Heart left ventricle (tissue), 16 donors: ENCODE measurements at regions of chr11 and their contacts with region 1.

Region 1: GRCh38 chr11:128336203-128336602 is 251.2 kb downstream of the ETS1 start:
- DNase-seq: peak; percentile 48 to 78 (median 50)
- ATAC-seq: peak in 3 of 4 donors; percentile 54 to 85 (median 78)
- H3K4me3 ChIP-seq: no peak overlapping the region
- H3K27ac ChIP-seq: peak overlapping the region in 9 of 12 donors; percentile 14 to 85 (median 74)
- H3K4me1 ChIP-seq: peaks cover 0 to 45% (median 23%) of the 10 kb centered on the region in 12 donors
- H3K27me3 ChIP-seq: no peaks in the 10 kb centered on the region
- CTCF ChIP-seq: no peak
- POLR2A ChIP-seq: no peak

Region 2: GRCh38 chr11:128269466-128269865 is 66.7 kb before region 1 on chr11:
- intact Hi-C with region 1: no loop called
- DNase-seq: no peak
- ATAC-seq: no peak
- H3K4me3 ChIP-seq: no peak overlapping the region
- H3K27ac ChIP-seq: no peak overlapping the region
- H3K4me1 ChIP-seq: peaks cover 0 to 17% (median 0%) of the 10 kb centered on the region in 12 donors
- H3K27me3 ChIP-seq: no peaks in the 10 kb centered on the region
- CTCF ChIP-seq: no peak
- POLR2A ChIP-seq: no peak

Region 3: GRCh38 chr11:128279866-128280265 is 56.3 kb before region 1 on chr11:
- intact Hi-C with region 1: no loop called
- DNase-seq: no peak
- ATAC-seq: no peak
- H3K4me3 ChIP-seq: no peak overlapping the region
- H3K27ac ChIP-seq: no peak overlapping the region
- H3K4me1 ChIP-seq: no peaks in the 10 kb centered on the region
- H3K27me3 ChIP-seq: no peaks in the 10 kb centered on the region
- CTCF ChIP-seq: no peak
- POLR2A ChIP-seq: no peak

Region 4: GRCh38 chr11:128299132-128299726 is 37.0 kb before region 1 on chr11:
- intact Hi-C with region 1: loop called in 2 of 10 experiments (anchors 2 to 5 kb)
- DNase-seq: no peak
- ATAC-seq: peak in 3 of 4 donors; percentile 30 to 38 (median 30)
- H3K4me3 ChIP-seq: no peak overlapping the region
- H3K27ac ChIP-seq: peak overlapping the region; percentile 3 to 76 (median 50)
- H3K4me1 ChIP-seq: peaks cover 0 to 54% (median 29%) of the 10 kb centered on the region in 12 donors
- H3K27me3 ChIP-seq: no peaks in the 10 kb centered on the region
- CTCF ChIP-seq: no peak
- POLR2A ChIP-seq: no peak

Region 5: GRCh38 chr11:128412847-128413791 is 76.9 kb after region 1 on chr11:
- intact Hi-C with region 1: loop called in 3 of 10 experiments (anchors 5 kb)
- DNase-seq: no peak
- ATAC-seq: no peak
- H3K4me3 ChIP-seq: no peak overlapping the region
- H3K27ac ChIP-seq: peak overlapping the region in 2 of 12 donors; percentile 4 to 33
- H3K4me1 ChIP-seq: peaks cover 0 to 44% (median 10%) of the 10 kb centered on the region in 12 donors
- H3K27me3 ChIP-seq: no peaks in the 10 kb centered on the region
- CTCF ChIP-seq: no peak
- POLR2A ChIP-seq: no peak

Region 6: GRCh38 chr11:128422576-128423370 is 86.6 kb after region 1 on chr11:
- intact Hi-C with region 1: loop called in 4 of 10 experiments (anchors 5 kb)
- DNase-seq: peak in 4 of 5 donors; percentile 42 to 71 (median 53)
- ATAC-seq: peak; percentile 14 to 80 (median 68)
- H3K4me3 ChIP-seq: no peak overlapping the region
- H3K27ac ChIP-seq: peak overlapping the region in 9 of 12 donors; percentile 19 to 90 (median 71)
- H3K4me1 ChIP-seq: peaks cover 8 to 45% (median 34%) of the 10 kb centered on the region in 12 donors
- H3K27me3 ChIP-seq: no peaks in the 10 kb centered on the region
- CTCF ChIP-seq: no peak
- POLR2A ChIP-seq: no peak

Region 7: GRCh38 chr11:128624269-128625175 is 288.3 kb after region 1 on chr11:
- intact Hi-C with region 1: loop called in 1 of 10 experiments (anchors 5 kb)
- DNase-seq: no peak
- ATAC-seq: no peak
- H3K4me3 ChIP-seq: no peak overlapping the region
- H3K27ac ChIP-seq: peak overlapping the region in 1 of 12 donors; percentile 81
- H3K4me1 ChIP-seq: peaks cover 0 to 76% (median 14%) of the 10 kb centered on the region in 12 donors
- H3K27me3 ChIP-seq: no peaks in the 10 kb centered on the region
- CTCF ChIP-seq: no peak
- POLR2A ChIP-seq: no peak